ENCODE measurements at regions of chr2 and their contacts with region 1.

Region 1: GRCh38 chr2:119702918-119703401 is 24.0 kb downstream of the TMEM177 start:
- DNase-seq: peak; percentile 85
- CTCF ChIP-seq: peak; percentile 95

Region 2: GRCh38 chr2:119491808-119492533 is 211.0 kb before region 1 on chr2:
- CTCF ChIA-PET with region 1: no interaction called
- POLR2A ChIA-PET with region 1: no interaction called
- DNase-seq: no peak
- CTCF ChIP-seq: no peak

Region 3: DNA sequence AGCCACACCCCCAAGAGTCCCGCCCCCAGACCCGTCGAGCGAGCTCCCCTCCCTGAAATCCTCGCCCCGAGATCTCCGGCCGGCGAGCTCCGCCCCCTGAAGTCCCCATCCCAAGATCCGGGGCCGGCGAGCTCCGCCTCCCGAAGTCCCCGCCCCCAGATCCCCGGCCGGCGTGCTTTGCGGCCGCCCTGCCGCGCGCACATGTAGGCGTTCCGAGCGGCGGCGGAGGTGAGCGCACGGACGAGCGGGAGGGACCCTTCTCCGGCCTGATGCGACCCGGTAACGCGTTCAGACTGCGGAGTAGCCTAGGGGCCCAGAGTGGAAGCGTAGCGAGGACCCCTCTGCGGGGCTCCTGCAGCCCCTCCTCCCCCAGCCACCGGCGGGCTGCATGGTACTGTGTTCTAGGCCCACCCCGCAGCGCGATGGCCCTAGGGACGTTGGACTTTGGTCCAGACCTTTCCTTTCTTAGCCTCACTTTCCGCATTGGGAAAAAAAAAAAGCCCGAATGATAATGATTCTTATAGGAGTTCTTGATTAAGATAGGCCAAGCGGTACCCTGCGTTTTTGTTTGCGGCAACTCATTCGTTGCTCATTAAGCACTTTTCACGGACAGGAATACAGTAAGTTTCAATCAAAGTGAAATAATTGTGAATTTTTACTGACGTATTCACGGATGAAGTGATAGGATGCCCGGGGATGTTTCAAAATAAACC is 23.8 kb before region 1 on chr2 and contains the start of gene TMEM177:
- CTCF ChIA-PET with region 1: interaction called, 17 read pairs
- POLR2A ChIA-PET with region 1: no interaction called
- DNase-seq: peak; percentile 99
- CTCF ChIP-seq: no peak

Region 4: DNA sequence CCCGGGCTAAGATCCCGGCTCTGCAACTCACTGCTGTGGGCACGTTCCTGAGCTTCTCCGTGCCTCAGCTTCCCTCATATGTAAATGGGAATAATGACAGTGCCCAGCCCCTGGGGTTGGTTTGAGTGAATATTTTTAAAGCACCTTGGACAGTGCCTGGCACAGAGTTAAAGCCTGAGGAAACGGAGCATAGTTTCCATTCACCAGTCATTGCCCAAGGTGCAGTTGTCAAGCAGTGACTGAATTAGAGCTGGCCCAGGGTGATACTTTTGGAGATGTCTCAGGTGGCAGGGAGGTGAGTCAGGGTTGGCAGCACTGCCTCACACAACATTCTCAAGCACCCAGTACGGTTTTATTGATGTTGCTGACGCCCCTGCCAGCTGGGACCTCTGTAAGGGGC is 11.8 kb before region 1 on chr2:
- CTCF ChIA-PET with region 1: interaction called, 10 read pairs
- POLR2A ChIA-PET with region 1: no interaction called
- DNase-seq: no peak
- CTCF ChIP-seq: no peak

Region 5: GRCh38 chr2:119721462-119721861 is 18.5 kb after region 1 on chr2:
- CTCF ChIA-PET with region 1: interaction called, 19 read pairs
- POLR2A ChIA-PET with region 1: no interaction called
- DNase-seq: no peak
- CTCF ChIP-seq: no peak

Region 6: DNA sequence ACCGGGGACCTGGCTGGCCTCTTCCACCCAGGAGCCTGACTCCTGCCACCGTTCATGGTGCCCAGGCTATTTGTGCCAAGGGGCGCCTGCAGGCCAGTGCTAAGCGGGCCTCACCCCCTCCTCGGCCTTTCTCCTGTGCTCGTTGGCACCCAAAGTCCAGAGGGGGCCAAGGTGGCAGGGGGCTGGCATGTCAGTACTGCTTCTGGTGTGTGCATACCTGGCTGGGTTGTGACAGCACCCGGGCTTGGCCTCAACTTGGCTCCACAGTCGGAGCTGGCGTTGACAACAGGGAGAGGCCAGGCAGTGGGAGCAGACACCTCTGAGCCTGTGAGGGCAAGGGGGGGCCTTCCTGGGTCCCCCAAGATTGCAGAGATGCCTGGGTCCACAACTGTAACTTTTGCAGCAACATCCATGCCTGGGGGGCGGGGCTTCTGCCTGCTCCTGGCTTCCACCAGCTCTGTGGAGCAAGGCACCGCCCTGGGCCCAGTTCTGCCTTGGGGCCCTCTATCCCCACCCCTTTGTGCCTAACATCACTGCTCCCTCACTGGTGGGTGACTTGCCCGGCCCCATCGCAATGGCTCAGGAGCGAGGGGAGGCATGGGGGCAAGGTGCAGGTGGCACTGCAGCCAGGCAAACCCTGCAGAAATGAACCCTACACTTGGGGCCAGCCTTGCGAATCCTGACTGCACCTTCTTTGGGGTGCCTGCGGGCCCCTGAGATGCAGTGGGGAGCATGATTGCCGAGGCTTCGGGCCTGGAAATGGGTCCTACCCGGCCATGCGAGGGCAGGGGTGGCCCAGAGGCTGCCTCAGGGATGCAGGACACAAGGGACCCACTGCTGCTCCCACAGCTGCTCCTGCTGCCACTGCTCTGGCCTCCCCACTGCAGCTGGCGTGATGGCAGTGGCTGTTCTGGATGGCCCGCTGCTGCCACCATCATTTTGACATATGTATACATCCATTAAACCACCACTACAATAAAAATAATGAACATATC is 92.6 kb after region 1 on chr2:
- CTCF ChIA-PET with region 1: no interaction called
- POLR2A ChIA-PET with region 1: no interaction called
- DNase-seq: no peak
- CTCF ChIP-seq: no peak

Region 7: DNA sequence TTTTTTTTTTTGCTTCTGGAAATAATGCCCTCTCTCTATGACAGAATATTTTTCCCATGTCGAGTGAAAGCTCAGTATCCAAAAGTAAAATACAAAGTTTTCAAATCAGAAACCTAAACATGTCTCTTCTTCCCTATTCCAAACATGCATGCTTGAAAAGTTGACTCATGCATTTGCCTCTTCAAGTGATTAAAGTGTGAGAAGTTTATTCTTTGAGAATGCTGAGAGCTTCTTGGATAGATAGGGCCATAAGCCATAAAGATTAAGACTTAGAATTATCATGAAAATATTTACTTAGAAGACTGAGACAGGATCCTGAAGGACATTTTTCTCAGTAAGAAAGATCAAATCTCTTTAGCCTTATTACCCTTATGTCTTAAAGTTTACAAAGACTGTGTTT is 211.3 kb after region 1 on chr2:
- CTCF ChIA-PET with region 1: no interaction called
- POLR2A ChIA-PET with region 1: no interaction called
- DNase-seq: no peak
- CTCF ChIP-seq: no peak

Measured in GM10248 (cell line).